Mammary epithelial cell (primary cell): ENCODE measurements at regions of chr13 and their contacts with region 1.

Region 1: GRCh38 chr13:90792335-90792734 is 555.2 kb upstream of the MIR17HG start:
- DNase-seq: peak; percentile 46
- H3K4me3 ChIP-seq: no peak overlapping the region
- H3K27ac ChIP-seq: no peak overlapping the region
- H3K4me1 ChIP-seq: no peaks in the 10 kb centered on the region
- H3K27me3 ChIP-seq: no peaks in the 10 kb centered on the region
- CTCF ChIP-seq: no peak

Region 2: DNA sequence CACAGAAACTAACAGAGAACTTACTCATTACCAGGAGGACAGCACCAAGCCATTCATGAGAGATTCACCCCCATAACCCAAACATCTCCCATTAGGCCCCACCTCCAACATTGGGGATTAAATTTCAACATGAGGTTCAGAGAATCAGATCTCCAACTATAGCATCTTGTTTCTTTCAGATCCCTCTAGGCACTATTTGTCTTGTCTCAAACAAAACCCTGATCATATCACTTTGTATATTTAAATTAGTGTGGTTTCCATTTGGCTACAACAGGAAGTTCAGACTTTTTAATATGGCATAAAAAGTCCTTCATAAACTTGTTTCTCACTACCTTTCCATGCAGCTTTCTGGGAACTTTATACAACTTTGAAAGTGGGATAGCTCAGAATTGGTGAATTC is 143.8 kb before region 1 on chr13:
- CTCF ChIA-PET with region 1: no interaction called
- dilution Hi-C with region 1: no loop called
- in situ Hi-C with region 1: no loop called
- intact Hi-C with region 1: no loop called
- DNase-seq: no peak
- H3K4me3 ChIP-seq: no peak overlapping the region
- H3K27ac ChIP-seq: no peak overlapping the region
- H3K4me1 ChIP-seq: no peaks in the 10 kb centered on the region
- H3K27me3 ChIP-seq: no peaks in the 10 kb centered on the region
- CTCF ChIP-seq: no peak

Region 3: GRCh38 chr13:90738881-90739280 is 53.5 kb before region 1 on chr13:
- CTCF ChIA-PET with region 1: no interaction called
- dilution Hi-C with region 1: no loop called
- in situ Hi-C with region 1: no loop called
- intact Hi-C with region 1: no loop called
- DNase-seq: no peak
- H3K4me3 ChIP-seq: no peak overlapping the region
- H3K27ac ChIP-seq: no peak overlapping the region
- H3K4me1 ChIP-seq: no peaks in the 10 kb centered on the region
- H3K27me3 ChIP-seq: no peaks in the 10 kb centered on the region
- CTCF ChIP-seq: no peak

Region 4: GRCh38 chr13:90834700-90835099 is 42.4 kb after region 1 on chr13:
- CTCF ChIA-PET with region 1: no interaction called
- dilution Hi-C with region 1: loop called (anchors 5 kb)
- in situ Hi-C with region 1: no loop called
- intact Hi-C with region 1: no loop called
- DNase-seq: no peak
- H3K4me3 ChIP-seq: no peak overlapping the region
- H3K27ac ChIP-seq: no peak overlapping the region
- H3K4me1 ChIP-seq: peaks cover 10% of the 10 kb centered on the region
- H3K27me3 ChIP-seq: no peaks in the 10 kb centered on the region
- CTCF ChIP-seq: no peak